Ovary (tissue), 10 donors: ENCODE measurements at regions of chr10 and their contacts with region 1.

Region 1: GRCh38 chr10:28381903-28382347 is 79.1 kb upstream of the MPP7 start:
- DNase-seq: peak; percentile 81 to 89 (median 82)
- H3K4me3 ChIP-seq: no peak overlapping the region
- H3K27ac ChIP-seq: no peak overlapping the region
- H3K4me1 ChIP-seq: no peaks in the 10 kb centered on the region
- H3K27me3 ChIP-seq: no peaks in the 10 kb centered on the region
- CTCF ChIP-seq: peak; percentile 66 to 95 (median 88)
- EP300 ChIP-seq: no peak
- POLR2A ChIP-seq: no peak

Region 2: DNA sequence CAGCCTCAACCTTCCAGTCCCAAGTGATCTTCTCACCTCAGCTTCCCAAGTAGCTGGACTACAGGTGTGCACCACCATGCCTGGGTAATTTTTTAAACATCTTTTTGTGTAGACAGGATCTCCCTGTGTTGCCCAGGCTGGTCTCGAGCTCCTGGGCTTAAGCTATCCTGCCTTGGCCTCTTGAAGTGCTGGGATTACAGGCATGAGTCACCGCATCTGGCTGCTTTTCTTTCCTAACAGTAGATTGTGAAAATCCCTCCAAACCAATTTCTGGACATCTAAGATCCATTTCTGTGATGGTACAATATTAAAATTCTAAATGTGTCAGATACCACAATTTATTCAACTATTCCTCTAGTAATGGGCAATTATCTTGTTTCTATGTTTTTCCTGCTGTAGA is 839.1 kb before region 1 on chr10:
- intact Hi-C with region 1: loop called in 1 of 4 experiments (anchors 10 kb)
- DNase-seq: no peak
- H3K4me3 ChIP-seq: no peak overlapping the region
- H3K27ac ChIP-seq: no peak overlapping the region
- H3K4me1 ChIP-seq: no peaks in the 10 kb centered on the region
- H3K27me3 ChIP-seq: no peaks in the 10 kb centered on the region
- CTCF ChIP-seq: no peak
- EP300 ChIP-seq: no peak
- POLR2A ChIP-seq: no peak

Region 3: DNA sequence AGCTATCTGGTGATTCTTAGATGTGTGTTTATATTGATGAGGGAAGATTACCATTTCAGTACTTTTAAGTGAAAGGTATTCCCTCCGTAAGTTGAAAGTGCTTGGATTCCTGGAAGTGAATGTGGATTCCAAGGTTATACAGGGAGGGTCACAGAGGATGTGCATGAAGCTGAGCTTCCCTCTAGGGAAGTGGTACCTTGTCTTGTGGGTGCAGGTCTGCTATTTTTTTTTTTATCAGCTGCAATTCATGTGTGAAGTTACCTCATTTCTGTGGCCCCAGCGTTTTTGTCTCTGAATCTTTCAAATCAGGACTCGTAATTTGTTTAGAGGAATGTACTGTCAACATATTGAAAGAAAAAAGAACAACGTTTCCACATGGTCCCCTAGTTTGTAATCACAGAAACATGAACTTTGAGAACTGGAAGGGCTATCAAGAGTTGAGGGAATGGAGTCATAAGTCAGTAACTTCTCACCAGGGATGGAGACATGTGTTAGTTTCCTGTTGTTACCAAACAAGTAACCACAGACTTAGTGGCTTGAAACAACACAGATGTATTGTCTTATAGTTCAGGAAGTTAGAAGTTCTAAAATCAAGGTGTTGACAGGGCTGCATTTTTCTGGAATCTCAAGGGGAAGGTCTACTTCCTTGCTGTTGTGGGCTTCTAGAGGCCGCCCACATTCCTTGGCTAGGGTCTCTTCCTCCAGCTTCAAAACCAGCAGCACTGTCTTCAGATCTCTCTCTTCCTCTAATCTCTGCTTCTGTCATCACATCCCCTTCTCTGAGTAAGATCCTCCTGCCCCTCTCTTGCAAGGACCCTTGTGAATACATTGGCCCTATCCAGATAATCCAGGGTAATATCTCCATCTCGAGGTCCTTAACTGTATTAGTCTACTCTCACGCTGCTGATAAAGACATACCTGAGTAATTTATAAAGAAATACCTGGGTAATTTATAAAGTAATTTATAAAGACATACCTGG is 813.4 kb before region 1 on chr10:
- intact Hi-C with region 1: loop called in 1 of 4 experiments (anchors 10 kb)
- DNase-seq: no peak
- H3K4me3 ChIP-seq: no peak overlapping the region
- H3K27ac ChIP-seq: no peak overlapping the region
- H3K4me1 ChIP-seq: no peaks in the 10 kb centered on the region
- H3K27me3 ChIP-seq: no peaks in the 10 kb centered on the region
- CTCF ChIP-seq: no peak
- EP300 ChIP-seq: no peak
- POLR2A ChIP-seq: no peak

Region 4: GRCh38 chr10:28250782-28251181 is 131.1 kb before region 1 on chr10:
- intact Hi-C with region 1: loop called (anchors 5 kb)
- DNase-seq: no peak
- H3K4me3 ChIP-seq: no peak overlapping the region
- H3K27ac ChIP-seq: no peak overlapping the region
- H3K4me1 ChIP-seq: no peaks in the 10 kb centered on the region
- H3K27me3 ChIP-seq: no peaks in the 10 kb centered on the region
- CTCF ChIP-seq: peak in 2 of 3 donors; percentile 56 to 57
- EP300 ChIP-seq: no peak
- POLR2A ChIP-seq: no peak

Region 5: DNA sequence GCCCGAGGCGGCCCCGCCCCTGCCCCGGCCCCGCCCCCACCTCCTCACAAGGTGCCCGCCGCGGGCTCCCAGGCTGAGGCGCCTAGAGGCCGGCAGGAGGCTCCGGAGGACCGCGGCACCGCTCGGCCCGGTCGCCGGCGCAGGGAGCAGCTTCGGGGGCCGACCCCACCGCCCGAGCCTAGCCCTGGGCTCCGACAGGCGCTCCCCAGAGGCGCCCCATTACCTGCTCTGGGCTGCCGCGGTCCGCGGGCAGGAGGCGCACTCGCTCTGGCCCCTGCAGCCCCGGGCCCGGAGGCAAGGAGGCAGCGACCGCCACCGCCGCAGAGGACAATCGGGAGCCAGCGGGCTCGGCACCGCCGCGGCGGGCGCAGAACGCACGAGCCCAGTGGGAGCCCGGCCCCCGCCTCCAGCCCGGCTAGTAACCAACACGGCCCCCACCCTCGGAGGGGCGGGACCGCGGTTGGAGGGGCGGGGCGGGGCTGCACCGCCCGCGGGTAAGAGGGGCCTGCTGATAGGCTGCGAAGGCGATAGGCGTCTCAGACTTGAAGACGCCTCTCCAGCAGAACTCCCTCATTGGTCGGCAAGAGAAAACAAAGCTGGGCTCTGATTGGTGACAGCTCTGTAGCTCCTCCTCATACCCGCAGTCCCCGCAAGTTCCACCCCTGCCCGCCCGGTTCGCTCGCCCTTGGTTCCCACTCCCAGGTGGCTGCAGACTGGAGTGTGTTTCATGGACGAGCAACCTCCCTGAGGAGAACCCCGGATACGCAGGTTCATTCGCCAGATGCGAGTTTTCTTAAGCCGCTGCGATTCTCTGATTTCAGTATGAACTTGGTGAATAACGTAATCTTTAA is 79.1 kb before region 1 on chr10 and contains the start of gene MPP7:
- intact Hi-C with region 1: loop called in 1 of 4 experiments (anchors 10 kb)
- DNase-seq: peak; percentile 94 to 96 (median 95)
- H3K4me3 ChIP-seq: peak within 1 kb of the TSS; percentile 89
- H3K27ac ChIP-seq: peak within 1 kb of the TSS; percentile 80 to 81
- H3K4me1 ChIP-seq: peaks cover 1% of the 10 kb centered on the region
- H3K27me3 ChIP-seq: no peaks in the 10 kb centered on the region
- CTCF ChIP-seq: peak; percentile 20 to 36 (median 29)
- EP300 ChIP-seq: no peak
- POLR2A ChIP-seq: peak; percentile 26
- total RNA-seq, gene MPP7: 2.2 to 13.3 (median 9.3) TPM

Region 6: GRCh38 chr10:28425422-28425821 is 43.5 kb after region 1 on chr10:
- intact Hi-C with region 1: no loop called
- DNase-seq: no peak
- H3K4me3 ChIP-seq: no peak overlapping the region
- H3K27ac ChIP-seq: no peak overlapping the region
- H3K4me1 ChIP-seq: no peaks in the 10 kb centered on the region
- H3K27me3 ChIP-seq: no peaks in the 10 kb centered on the region
- CTCF ChIP-seq: no peak
- EP300 ChIP-seq: no peak
- POLR2A ChIP-seq: no peak